Activated T-helper 1 cell treated with anti-CD3 and anti-CD28 coated beads, Interleukin-12 subunit alpha, Interleukin-12 subunit beta, Interleukin-2, Interleukin-4 antibody, amounts not matched to agents 30 ng/mL and 10 ng/mL and 1 ng/mL, durations not matched to agents 14 hours and 24 hours and 36 hours (primary cell): ENCODE measurements at regions of chrX and their contacts with region 1.

Region 1: GRCh38 chrX:139766545-139766983 is 58.6 kb upstream of the MCF2 start:
- DNase-seq: peak; percentile 32
- H3K4me3 Mint-ChIP-seq: no peak overlapping the region
- H3K27ac Mint-ChIP-seq: no peak overlapping the region
- H3K4me1 Mint-ChIP-seq: no peaks in the 10 kb centered on the region
- H3K27me3 Mint-ChIP-seq: no peaks in the 10 kb centered on the region

Region 2: DNA sequence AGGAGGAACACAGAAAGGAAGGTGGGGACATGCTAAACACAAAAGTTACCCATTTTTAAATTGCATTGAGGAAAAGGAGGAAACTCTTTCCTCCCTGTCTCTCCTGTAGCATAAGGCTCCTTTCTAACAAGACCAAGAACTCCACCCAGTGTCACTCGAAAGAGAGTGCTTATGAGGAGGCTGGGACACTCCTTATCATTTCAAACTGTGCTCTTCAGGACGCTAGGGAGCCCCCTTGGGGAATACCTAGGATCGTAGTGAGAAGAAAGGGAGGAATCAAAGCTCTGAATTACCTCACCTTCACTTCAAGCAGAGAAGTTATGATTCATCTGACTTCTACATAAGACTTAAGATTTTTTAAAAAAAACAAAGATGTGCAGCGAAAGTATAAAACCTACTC is 170.5 kb before region 1 on chrX:
- intact Hi-C with region 1: no loop called
- DNase-seq: no peak
- H3K4me3 Mint-ChIP-seq: no peak overlapping the region
- H3K27ac Mint-ChIP-seq: no peak overlapping the region
- H3K4me1 Mint-ChIP-seq: no peaks in the 10 kb centered on the region
- H3K27me3 Mint-ChIP-seq: peaks cover 3% of the 10 kb centered on the region

Region 3: DNA sequence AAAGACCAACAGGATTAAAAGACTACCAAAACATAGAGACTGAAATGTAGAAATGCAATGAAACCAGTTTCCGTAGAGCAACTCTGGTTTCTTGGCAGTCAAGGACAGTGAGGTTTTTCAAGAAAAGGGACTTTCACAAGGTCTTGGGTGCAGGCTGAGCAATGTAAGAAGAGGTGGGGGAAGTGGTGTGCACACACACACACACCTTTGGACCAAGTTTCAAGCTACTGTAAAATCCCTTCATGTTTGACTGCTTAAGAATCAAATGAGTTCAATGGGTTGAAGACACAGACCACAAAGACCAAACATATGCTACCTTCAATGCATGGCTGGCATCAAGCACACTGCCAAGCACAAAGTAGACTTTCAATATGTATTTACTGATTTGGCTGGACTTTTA is 40.8 kb before region 1 on chrX:
- intact Hi-C with region 1: loop called (anchors 5 kb)
- DNase-seq: no peak
- H3K4me3 Mint-ChIP-seq: no peak overlapping the region
- H3K27ac Mint-ChIP-seq: no peak overlapping the region
- H3K4me1 Mint-ChIP-seq: peaks cover 32% of the 10 kb centered on the region
- H3K27me3 Mint-ChIP-seq: no peaks in the 10 kb centered on the region

Region 4: GRCh38 chrX:139739138-139739537 is 27.4 kb before region 1 on chrX:
- intact Hi-C with region 1: loop called (anchors 1 kb)
- DNase-seq: no peak
- H3K4me3 Mint-ChIP-seq: peak overlapping the region; percentile 46
- H3K27ac Mint-ChIP-seq: peak overlapping the region; percentile 69
- H3K4me1 Mint-ChIP-seq: peaks cover 20% of the 10 kb centered on the region
- H3K27me3 Mint-ChIP-seq: no peaks in the 10 kb centered on the region

Region 5: GRCh38 chrX:139750390-139750789 is 16.2 kb before region 1 on chrX:
- intact Hi-C with region 1: no loop called
- DNase-seq: no peak
- H3K4me3 Mint-ChIP-seq: no peak overlapping the region
- H3K27ac Mint-ChIP-seq: no peak overlapping the region
- H3K4me1 Mint-ChIP-seq: no peaks in the 10 kb centered on the region
- H3K27me3 Mint-ChIP-seq: no peaks in the 10 kb centered on the region

Region 6: GRCh38 chrX:139795196-139795595 is 28.6 kb after region 1 on chrX:
- intact Hi-C with region 1: loop called (anchors 1 kb)
- DNase-seq: peak; percentile 0
- H3K4me3 Mint-ChIP-seq: peak overlapping the region; percentile 39
- H3K27ac Mint-ChIP-seq: peak overlapping the region; percentile 56
- H3K4me1 Mint-ChIP-seq: peaks cover 22% of the 10 kb centered on the region
- H3K27me3 Mint-ChIP-seq: no peaks in the 10 kb centered on the region

Region 7: GRCh38 chrX:139932901-139933796 is 166.6 kb after region 1 on chrX and contains the start of gene ATP11C:
- intact Hi-C with region 1: loop called (anchors 2 kb)
- DNase-seq: peak; percentile 68
- H3K4me3 Mint-ChIP-seq: peak within 1 kb of the TSS; percentile 84
- H3K27ac Mint-ChIP-seq: peak within 1 kb of the TSS; percentile 94
- H3K4me1 Mint-ChIP-seq: peaks cover 19% of the 10 kb centered on the region
- H3K27me3 Mint-ChIP-seq: no peaks in the 10 kb centered on the region
- total RNA-seq, gene ATP11C: 17.7 and 18.3 TPM in 2 replicates